ENCODE measurements at regions of chr1 and their contacts with region 1.

Region 1: GRCh38 chr1:60857851-60858250 is 224.5 kb upstream of the NFIA start:
- DNase-seq: no peak
- ATAC-seq: no peak

Region 2: GRCh38 chr1:60969971-60970509 is 112.2 kb after region 1 on chr1:
- intact Hi-C with region 1: loop called (anchors 10 kb)
- DNase-seq: no peak
- ATAC-seq: peak; percentile 89

Region 3: DNA sequence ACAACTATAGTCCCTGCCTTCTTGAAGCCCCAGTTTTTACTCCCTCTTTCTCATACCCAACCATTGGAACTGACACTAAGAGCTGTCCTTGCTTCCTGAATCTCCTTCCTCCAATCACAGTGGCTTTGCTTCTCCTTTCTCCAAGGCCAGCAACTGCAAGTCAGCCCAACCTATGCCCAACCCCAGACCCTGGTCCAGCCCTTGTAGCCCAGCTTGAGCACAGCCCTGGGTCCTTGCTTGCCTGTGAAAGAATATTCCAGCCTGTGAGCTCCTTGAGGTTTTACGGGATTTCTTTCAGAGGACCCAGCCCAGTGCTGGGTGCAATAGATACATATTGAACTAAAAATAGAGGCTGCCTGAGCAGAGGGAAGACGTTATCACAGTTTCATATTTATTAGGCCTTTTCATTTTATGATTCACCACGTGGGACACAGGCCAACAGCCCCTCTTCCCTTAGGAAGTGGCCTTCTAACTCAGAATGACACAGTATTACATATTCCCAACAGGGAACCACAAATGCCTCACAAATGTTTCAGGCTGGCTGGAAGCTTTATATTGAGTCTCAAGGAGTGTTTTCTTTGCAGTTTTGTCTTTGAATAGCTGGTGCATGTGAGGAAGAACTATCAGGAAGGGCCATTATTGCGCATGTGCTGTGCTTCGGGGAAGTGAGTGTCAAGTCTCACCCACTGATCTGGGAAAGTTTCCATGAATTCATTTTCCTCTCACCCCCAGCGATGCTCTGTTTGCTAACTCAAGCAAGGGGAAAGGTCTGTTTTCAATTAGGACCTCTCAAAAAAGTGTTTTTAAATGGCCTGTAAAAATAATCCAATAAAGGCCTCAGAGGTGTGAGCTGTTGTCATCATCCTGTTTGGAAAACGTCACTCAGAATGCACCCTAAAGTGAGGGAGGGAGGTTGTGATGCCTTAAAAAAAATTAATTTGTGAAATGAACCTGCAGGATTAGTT is 132.2 kb after region 1 on chr1:
- intact Hi-C with region 1: no loop called
- DNase-seq: peak; percentile 70
- ATAC-seq: peak; percentile 71

Region 4: DNA sequence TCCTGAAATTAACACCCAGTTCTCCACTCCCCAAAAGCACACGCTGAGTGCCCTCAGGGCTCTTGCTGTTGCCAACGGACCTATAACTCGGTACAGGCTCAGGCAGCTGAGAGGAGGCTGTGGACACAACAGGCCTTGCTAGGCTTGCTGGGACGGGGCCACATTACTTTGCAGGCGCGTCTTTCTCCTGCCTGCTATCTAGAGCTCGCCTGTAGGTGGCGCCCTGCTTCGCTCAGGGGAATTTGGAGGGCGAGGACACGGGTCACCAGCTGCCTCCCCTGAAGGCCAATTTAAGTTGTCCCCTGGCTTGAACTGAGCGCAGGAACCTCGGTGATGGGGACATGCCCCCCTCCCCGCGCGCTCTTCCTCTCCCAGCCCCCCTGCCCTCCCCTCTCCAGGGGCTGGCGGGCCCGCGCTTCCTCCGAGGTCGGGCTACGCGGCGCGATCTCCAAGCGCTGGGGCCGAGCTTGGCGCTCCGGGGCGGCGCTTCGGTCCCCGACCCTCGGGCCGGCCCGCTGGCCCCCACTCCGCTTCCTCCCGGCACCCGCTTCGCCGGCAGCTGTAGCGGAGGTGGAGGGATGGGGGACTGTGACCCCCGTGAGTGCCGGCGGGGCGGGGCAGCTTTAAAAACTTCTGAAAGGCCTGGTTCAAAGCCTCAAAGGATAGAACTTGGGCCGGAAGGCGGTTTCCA is 192.1 kb after region 1 on chr1:
- intact Hi-C with region 1: no loop called
- DNase-seq: peak; percentile 97
- ATAC-seq: peak; percentile 79

Measured in Right ventricle myocardium superior (tissue), 1 donor.